ENCODE measurements at regions of chr3 and their contacts with region 1.

Region 1: DNA sequence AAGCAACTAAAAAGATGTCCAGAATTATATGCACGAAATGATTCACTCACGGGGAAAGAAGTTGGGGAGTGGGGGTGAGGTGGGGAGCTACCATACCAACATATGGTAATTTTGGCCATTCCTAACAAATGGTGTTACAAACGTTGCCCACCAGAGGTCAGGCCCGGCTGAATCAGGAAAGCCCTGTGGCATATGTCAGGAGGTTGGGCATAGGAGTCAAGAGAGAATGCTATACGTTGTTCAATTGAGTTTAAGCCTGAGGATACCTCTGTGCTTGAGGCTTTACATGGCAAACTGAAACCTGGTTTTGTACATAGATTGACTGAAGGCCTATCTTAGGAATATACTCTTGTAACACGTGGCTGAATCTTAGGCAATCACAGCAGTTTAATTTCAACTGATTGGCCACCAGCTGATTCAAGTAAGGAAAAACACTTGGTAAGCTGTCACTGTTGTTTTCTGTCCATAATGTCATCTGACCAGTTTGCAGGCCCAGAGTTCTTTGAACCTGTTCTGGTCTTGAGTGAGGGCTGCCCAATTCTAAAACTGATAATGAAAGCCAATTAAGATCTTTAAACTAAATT is 23.4 kb upstream of the SLC2A2 start:
- DNase-seq: peak; percentile 34
- ATAC-seq: peak; percentile 91
- H3K4me3 ChIP-seq: no peak overlapping the region
- H3K27ac ChIP-seq: no peak overlapping the region
- H3K4me1 ChIP-seq: no peaks in the 10 kb centered on the region
- H3K27me3 ChIP-seq: no peaks in the 10 kb centered on the region
- CTCF ChIP-seq: peak; percentile 65 to 81 (median 72)
- EP300 ChIP-seq: no peak
- POLR2A ChIP-seq: no peak
- RAD21 ChIP-seq: peak; percentile 87

Region 2: DNA sequence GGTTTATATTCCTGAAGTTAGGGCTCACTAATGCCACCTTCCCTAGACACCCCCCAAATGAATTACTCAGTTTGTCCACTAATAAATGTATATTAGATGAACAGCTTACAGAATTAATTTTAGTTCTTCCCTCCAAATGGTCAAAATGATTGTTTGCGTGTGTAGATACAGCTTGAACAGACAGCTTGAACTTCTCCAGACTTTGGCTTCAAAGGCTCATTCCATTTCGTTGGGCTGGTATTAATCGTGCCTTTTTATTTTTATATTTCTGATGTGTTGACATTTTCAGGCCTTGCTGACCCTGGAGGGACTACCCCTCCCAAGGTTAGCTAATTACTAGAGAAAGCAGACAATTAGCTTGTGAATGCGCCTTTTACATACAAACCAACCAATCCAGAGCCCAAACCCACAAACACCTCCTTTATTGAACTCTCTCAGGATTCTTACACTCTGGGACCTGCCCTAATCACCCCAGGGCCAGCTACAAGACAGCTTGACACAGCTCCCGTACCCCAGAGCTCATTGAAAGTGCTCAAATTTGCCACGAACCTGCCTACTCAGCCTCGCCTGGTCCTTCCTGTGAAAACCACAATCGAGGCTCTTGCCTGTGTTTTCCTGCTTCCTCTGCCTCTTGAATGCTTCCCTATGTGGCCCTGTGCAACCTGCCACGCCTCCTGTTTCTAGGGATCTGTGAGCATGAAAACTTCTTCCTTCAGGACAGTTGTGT is 220.2 kb before region 1 on chr3:
- CTCF ChIA-PET with region 1: no interaction called
- POLR2A ChIA-PET with region 1: no interaction called
- RAD21 ChIA-PET with region 1: no interaction called
- SMC1A ChIA-PET with region 1: no interaction called
- in situ Hi-C with region 1: no loop called
- intact Hi-C with region 1: no loop called
- DNase-seq: no peak
- ATAC-seq: no peak
- H3K4me3 ChIP-seq: no peak overlapping the region
- H3K27ac ChIP-seq: no peak overlapping the region
- H3K4me1 ChIP-seq: no peaks in the 10 kb centered on the region
- H3K27me3 ChIP-seq: peaks cover 0 to 10% of the 10 kb centered on the region in 2 experiments
- CTCF ChIP-seq: no peak
- EP300 ChIP-seq: no peak
- POLR2A ChIP-seq: no peak
- RAD21 ChIP-seq: no peak

Region 3: GRCh38 chr3:171061749-171062148 is 11.8 kb after region 1 on chr3:
- CTCF ChIA-PET with region 1: interaction called, 11 read pairs
- POLR2A ChIA-PET with region 1: no interaction called
- RAD21 ChIA-PET with region 1: no interaction called
- SMC1A ChIA-PET with region 1: interaction called, 5 read pairs
- in situ Hi-C with region 1: no loop called
- intact Hi-C with region 1: no loop called
- DNase-seq: no peak
- ATAC-seq: no peak
- H3K4me3 ChIP-seq: no peak overlapping the region
- H3K27ac ChIP-seq: no peak overlapping the region
- H3K4me1 ChIP-seq: no peaks in the 10 kb centered on the region
- H3K27me3 ChIP-seq: no peaks in the 10 kb centered on the region
- CTCF ChIP-seq: no peak
- EP300 ChIP-seq: no peak
- POLR2A ChIP-seq: no peak
- RAD21 ChIP-seq: no peak

Region 4: GRCh38 chr3:171443211-171443957 is 393.4 kb after region 1 on chr3:
- CTCF ChIA-PET with region 1: no interaction called
- POLR2A ChIA-PET with region 1: no interaction called
- RAD21 ChIA-PET with region 1: no interaction called
- SMC1A ChIA-PET with region 1: no interaction called
- in situ Hi-C with region 1: no loop called
- intact Hi-C with region 1: no loop called
- DNase-seq: no peak
- ATAC-seq: no peak
- H3K4me3 ChIP-seq: no peak overlapping the region
- H3K27ac ChIP-seq: no peak overlapping the region
- H3K4me1 ChIP-seq: peaks cover 39% of the 10 kb centered on the region
- H3K27me3 ChIP-seq: no peaks in the 10 kb centered on the region
- CTCF ChIP-seq: no peak
- EP300 ChIP-seq: no peak
- POLR2A ChIP-seq: no peak
- RAD21 ChIP-seq: no peak

Region 5: GRCh38 chr3:171574556-171575240 is 524.7 kb after region 1 on chr3:
- CTCF ChIA-PET with region 1: no interaction called
- POLR2A ChIA-PET with region 1: no interaction called
- RAD21 ChIA-PET with region 1: interaction called, 4 read pairs
- SMC1A ChIA-PET with region 1: interaction called, 16 read pairs
- in situ Hi-C with region 1: loop called (anchors 5 kb)
- intact Hi-C with region 1: no loop called
- DNase-seq: no peak
- ATAC-seq: peak; percentile 17; the same call in 1 of the 3 replicates
- H3K4me3 ChIP-seq: no peak overlapping the region
- H3K27ac ChIP-seq: no peak overlapping the region
- H3K4me1 ChIP-seq: no peaks in the 10 kb centered on the region
- H3K27me3 ChIP-seq: no peaks in the 10 kb centered on the region
- CTCF ChIP-seq: no peak
- EP300 ChIP-seq: no peak
- POLR2A ChIP-seq: no peak
- RAD21 ChIP-seq: no peak